CD14-positive monocyte (primary cell): ENCODE measurements at regions of chr6 and their contacts with region 1.

Region 1: GRCh38 chr6:106163446-106163965 is 77.4 kb downstream of the PRDM1 start:
- DNase-seq: peak; percentile 72 to 86 (median 83)
- H3K4me3 ChIP-seq: peak overlapping the region; percentile 14 to 66 (median 19)
- H3K4me3 Mint-ChIP-seq: peak overlapping the region; percentile 75 to 88
- H3K27ac ChIP-seq: peak overlapping the region; percentile 99 to 100
- H3K27ac Mint-ChIP-seq: peak overlapping the region; percentile 99 to 100 (median 100)
- H3K4me1 ChIP-seq: peaks cover 45 to 50% of the 10 kb centered on the region in 2 donors
- H3K4me1 Mint-ChIP-seq: peaks cover 44% of the 10 kb centered on the region
- H3K27me3 ChIP-seq: no peaks in the 10 kb centered on the region
- H3K27me3 Mint-ChIP-seq: no peaks in the 10 kb centered on the region
- CTCF ChIP-seq: no peak

Region 2: GRCh38 chr6:105880030-105880492 is 283.4 kb before region 1 on chr6:
- intact Hi-C with region 1: loop called in 1 of 2 experiments (anchors 10 kb)
- DNase-seq: peak; percentile 95 to 98 (median 96)
- H3K4me3 ChIP-seq: peak overlapping the region in 1 of 3 experiments; percentile 34
- H3K4me3 Mint-ChIP-seq: peak overlapping the region; percentile 54 to 75
- H3K27ac ChIP-seq: peak overlapping the region; percentile 75 to 95
- H3K27ac Mint-ChIP-seq: peak overlapping the region; percentile 90 to 99 (median 97)
- H3K4me1 ChIP-seq: peaks cover 49 to 59% of the 10 kb centered on the region in 2 donors
- H3K4me1 Mint-ChIP-seq: peaks cover 68% of the 10 kb centered on the region
- H3K27me3 ChIP-seq: no peaks in the 10 kb centered on the region
- H3K27me3 Mint-ChIP-seq: peaks cover 0 to 9% (median 0%) of the 10 kb centered on the region in 3 donors
- CTCF ChIP-seq: no peak

Region 3: GRCh38 chr6:105898286-105898685 is 265.2 kb before region 1 on chr6:
- intact Hi-C with region 1: no loop called
- DNase-seq: peak in 1 of 3 donors; percentile 33
- H3K4me3 ChIP-seq: no peak overlapping the region
- H3K4me3 Mint-ChIP-seq: no peak overlapping the region
- H3K27ac ChIP-seq: no peak overlapping the region
- H3K27ac Mint-ChIP-seq: no peak overlapping the region
- H3K4me1 ChIP-seq: peaks cover 19 to 20% of the 10 kb centered on the region in 2 donors
- H3K4me1 Mint-ChIP-seq: peaks cover 26% of the 10 kb centered on the region
- H3K27me3 ChIP-seq: no peaks in the 10 kb centered on the region
- H3K27me3 Mint-ChIP-seq: peaks cover 0 to 2% (median 0%) of the 10 kb centered on the region in 3 donors
- CTCF ChIP-seq: no peak

Region 4: DNA sequence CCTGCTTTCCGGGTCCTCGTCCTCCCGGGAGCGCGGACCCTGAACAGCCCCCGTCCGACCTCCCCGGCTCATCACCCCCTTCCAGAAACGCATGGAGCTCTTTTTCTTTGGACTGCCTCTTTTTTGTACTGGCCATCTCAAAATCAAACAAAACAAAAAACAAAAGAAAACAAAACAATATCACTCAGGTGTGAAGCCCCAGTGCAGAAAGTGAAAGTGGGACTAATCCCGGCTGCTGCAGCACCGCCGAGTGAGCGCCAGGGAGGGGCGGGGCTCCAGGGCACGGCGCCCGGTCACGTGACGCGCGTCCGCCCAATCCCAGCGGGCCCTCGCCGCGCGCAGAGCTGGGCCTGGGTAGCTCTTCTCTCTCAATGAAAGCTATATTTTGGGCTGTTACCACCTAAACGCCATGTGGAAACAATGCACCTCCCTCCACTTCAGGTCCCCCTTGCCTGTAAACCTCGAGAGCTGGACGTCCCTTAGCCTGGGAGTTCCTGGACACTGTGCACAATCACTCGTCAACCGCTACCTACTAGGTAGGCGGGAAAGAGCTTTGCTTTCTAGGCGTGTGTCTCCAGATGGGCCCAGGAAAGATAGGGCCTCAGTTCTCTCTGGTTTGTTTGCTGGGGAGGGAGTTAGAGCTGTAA is 171.1 kb before region 1 on chr6:
- intact Hi-C with region 1: loop called in 1 of 2 experiments (anchors 10 kb)
- DNase-seq: peak; percentile 76 to 88 (median 85)
- H3K4me3 ChIP-seq: peak overlapping the region; percentile 81 to 94 (median 93)
- H3K4me3 Mint-ChIP-seq: peak overlapping the region; percentile 93 to 99
- H3K27ac ChIP-seq: peak overlapping the region in 1 of 2 donors; percentile 79
- H3K27ac Mint-ChIP-seq: peak overlapping the region; percentile 36 to 93 (median 86)
- H3K4me1 ChIP-seq: peaks cover 30 to 40% of the 10 kb centered on the region in 2 donors
- H3K4me1 Mint-ChIP-seq: peaks cover 31% of the 10 kb centered on the region
- H3K27me3 ChIP-seq: peaks cover 56 to 79% of the 10 kb centered on the region in 2 donors
- H3K27me3 Mint-ChIP-seq: peaks cover 70 to 75% (median 72%) of the 10 kb centered on the region in 3 donors
- CTCF ChIP-seq: no peak

Region 5: DNA sequence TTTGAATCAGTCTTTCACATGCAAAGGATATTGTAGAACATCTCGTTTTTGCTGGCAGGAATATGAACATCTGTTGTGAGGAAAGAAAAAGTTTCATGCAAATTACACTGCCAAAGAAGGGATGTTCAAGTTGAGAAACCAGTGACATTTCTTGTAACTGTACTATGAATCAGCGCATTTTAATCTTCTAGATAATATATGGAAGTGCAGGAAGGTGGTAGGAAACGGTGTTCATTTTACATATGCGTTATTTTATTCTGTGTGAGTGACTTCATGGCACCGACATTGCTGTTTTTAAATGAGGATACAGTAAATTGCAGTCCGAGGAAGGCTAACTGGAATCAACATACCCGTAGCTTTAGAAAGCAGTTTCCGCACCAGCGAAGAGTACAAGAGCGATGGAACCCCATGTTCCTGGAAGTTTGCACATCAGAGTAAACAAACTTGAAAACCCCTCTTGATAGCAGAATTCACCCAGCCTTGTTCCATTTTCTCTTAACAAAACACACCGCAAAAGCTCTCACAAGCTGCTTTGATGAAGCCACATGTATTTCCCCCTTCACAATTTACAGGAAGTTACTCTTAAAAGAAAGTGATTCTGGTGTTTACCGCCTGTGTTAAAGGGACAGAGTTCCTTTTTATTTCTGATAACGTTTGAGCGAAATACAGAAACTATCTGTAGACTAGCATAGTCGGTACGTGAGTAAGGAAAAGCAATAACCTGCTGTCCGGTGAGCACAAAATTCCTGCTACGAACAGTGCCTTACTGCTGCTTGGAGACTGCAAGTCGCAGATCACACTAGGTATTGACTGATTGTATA is 65.9 kb before region 1 on chr6:
- intact Hi-C with region 1: loop called in 1 of 2 experiments (anchors 5 kb)
- DNase-seq: peak; percentile 49 to 74 (median 70)
- H3K4me3 ChIP-seq: peak overlapping the region; percentile 66 to 100 (median 87)
- H3K4me3 Mint-ChIP-seq: peak overlapping the region; percentile 85 to 95
- H3K27ac ChIP-seq: peak overlapping the region; percentile 59 to 94
- H3K27ac Mint-ChIP-seq: peak overlapping the region; percentile 92 to 97 (median 95)
- H3K4me1 ChIP-seq: peaks cover 13 to 22% of the 10 kb centered on the region in 2 donors
- H3K4me1 Mint-ChIP-seq: peaks cover 36% of the 10 kb centered on the region
- H3K27me3 ChIP-seq: no peaks in the 10 kb centered on the region
- H3K27me3 Mint-ChIP-seq: no peaks in the 10 kb centered on the region
- CTCF ChIP-seq: no peak

Region 6: DNA sequence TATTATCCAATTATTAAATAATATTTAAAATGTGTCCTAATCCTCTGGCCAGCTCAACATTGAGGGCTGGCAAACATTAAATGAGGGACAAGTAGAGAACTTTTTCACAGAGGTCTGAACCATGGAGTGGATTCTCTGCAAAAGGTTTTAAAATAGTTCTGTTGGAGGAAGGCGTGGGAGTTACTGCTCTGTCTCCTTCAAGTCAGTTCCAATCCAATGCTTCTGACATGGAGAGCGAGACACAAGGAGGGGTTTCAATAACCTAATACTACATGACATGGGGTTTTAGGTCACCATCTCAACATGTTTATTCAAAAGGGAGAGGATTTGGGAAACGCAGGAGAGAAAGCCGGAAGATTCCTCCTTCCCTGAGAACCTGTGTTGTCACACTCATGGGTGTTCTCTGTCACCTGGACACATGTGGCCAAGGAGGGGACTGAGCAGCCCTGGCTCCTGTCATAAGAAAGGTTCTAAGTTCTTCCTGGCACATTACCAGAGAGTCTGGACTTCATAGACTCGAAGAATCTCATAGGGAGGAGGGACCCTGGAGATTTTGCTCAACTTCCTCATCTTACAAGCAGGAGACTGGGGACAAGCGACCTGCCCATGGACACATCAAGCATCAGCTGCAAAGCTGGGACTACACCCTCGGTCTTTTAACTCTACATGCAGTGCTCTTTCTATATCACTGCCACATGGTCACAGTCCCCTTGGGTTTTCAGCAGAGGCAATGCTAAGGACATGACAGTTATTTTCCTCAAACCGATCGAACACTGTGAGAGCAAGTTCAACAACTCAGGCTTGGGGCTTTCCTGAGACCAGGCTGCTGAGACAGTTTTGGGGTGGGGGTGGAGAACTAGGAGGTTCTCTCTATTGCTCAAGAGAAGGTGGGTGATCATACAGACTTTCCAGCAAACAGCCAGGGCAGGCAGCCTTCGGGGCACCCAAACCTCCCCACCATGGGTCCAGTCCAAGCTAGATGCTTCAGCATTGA is 38.8 kb before region 1 on chr6:
- intact Hi-C with region 1: loop called in 1 of 2 experiments (anchors 5 kb)
- DNase-seq: peak; percentile 25 to 39 (median 29)
- H3K4me3 ChIP-seq: no peak overlapping the region
- H3K4me3 Mint-ChIP-seq: no peak overlapping the region
- H3K27ac ChIP-seq: peak overlapping the region in 1 of 2 donors; percentile 64
- H3K27ac Mint-ChIP-seq: peak overlapping the region in 5 of 7 donors; percentile 38 to 77 (median 73)
- H3K4me1 ChIP-seq: peaks cover 36 to 50% of the 10 kb centered on the region in 2 donors
- H3K4me1 Mint-ChIP-seq: peaks cover 56% of the 10 kb centered on the region
- H3K27me3 ChIP-seq: no peaks in the 10 kb centered on the region
- H3K27me3 Mint-ChIP-seq: peaks cover 0 to 4% (median 0%) of the 10 kb centered on the region in 3 donors
- CTCF ChIP-seq: no peak